Activated T-helper 1 cell treated with anti-CD3 and anti-CD28 coated beads, Interleukin-12 subunit alpha, Interleukin-12 subunit beta, Interleukin-2, Interleukin-4 antibody, amounts not matched to agents 30 ng/mL and 10 ng/mL and 1 ng/mL, durations not matched to agents 14 hours and 24 hours and 36 hours (primary cell): ENCODE measurements at regions of chr3 and their contacts with region 1.

Region 1: DNA sequence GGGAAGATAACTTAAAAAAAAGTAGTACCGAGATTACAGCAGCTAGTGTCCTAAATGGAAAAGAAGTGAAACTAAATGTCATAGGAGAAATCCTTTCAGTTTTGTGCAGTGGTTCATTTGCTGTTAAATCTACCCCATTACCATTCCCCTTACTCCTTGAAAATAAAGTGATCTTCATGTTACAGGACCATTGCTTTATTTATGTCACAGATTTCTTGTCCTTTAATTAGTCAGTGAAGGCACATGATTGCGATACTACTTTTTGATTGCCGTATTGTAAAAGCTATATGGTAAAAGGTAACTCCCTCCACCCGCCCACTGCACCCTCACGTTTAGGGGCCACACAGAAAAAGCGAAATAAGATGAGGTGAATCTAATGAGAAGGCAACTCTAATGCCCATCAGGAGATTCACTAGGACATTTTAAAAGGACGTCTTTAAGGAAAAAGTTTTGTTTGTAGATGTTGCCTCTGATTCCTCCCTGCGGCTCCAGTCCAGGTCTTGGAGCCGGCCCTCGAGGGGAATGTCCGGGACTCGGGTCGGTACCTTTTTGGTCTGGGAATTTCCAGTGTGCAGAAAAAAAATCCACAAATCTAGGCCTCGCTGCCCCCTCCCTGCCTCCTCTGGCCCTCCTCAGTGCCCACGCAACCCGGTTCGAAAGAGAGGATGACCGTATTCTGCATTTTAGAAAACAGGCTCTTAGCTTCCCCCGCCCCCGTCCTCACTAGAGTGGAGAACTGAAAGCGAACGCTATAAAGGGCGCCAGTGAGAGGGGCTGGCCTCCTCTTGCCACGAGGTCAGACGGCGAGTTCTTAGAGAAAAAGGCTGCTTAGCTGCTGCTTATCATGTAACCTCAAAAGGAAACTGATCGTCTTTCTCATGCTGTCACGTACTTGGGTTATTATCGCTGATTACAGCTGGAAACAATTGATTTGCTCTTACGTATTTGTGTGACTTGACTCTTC is 21.8 kb upstream of the NFKBIZ start:
- DNase-seq: peak; percentile 77
- H3K4me3 Mint-ChIP-seq: peak overlapping the region; percentile 93
- H3K27ac Mint-ChIP-seq: peak overlapping the region; percentile 90
- H3K4me1 Mint-ChIP-seq: peaks cover 63% of the 10 kb centered on the region
- H3K27me3 Mint-ChIP-seq: no peaks in the 10 kb centered on the region

Region 2: GRCh38 chr3:101509281-101509680 is 318.2 kb before region 1 on chr3:
- intact Hi-C with region 1: no loop called
- DNase-seq: no peak
- H3K4me3 Mint-ChIP-seq: no peak overlapping the region
- H3K27ac Mint-ChIP-seq: no peak overlapping the region
- H3K4me1 Mint-ChIP-seq: peaks cover 32% of the 10 kb centered on the region
- H3K27me3 Mint-ChIP-seq: no peaks in the 10 kb centered on the region

Region 3: DNA sequence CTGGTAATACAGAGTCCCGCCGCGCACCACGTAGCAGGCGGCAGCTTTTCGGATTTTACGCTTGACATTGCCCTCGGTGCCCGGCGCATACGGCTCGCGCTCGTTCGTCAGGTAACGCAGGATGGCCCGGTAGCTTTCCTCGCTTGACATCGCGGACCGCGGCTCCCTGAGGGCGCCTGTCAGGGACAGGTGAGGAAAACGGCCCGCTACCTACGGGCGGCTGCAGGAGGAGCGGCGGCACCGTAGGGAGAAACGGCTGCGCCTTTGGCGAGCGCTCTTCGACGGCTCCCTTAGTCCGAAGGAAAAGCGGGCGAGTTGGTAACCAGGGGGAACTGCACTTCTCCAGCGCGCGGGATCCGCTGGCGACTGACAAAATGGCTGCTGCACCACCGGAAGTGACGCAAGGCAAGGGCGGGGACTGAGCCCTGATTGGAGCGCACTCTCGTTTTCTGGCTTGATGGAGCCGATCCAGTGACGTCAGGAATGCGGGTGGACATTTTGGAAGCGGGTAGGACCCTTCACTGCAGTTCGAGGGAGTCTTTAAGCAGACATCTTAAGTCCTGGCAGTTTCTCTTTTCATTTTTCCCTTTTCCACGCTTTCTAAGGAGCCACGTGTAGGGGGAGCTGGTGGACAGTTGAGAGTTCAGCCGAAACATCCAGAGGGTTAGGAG is 150.6 kb before region 1 on chr3 and contains the start of gene ZBTB11:
- intact Hi-C with region 1: loop called (anchors 2 kb)
- DNase-seq: peak; percentile 99
- H3K4me3 Mint-ChIP-seq: peak within 1 kb of the TSS; percentile 96
- H3K27ac Mint-ChIP-seq: peak within 1 kb of the TSS; percentile 97
- H3K4me1 Mint-ChIP-seq: peaks cover 56% of the 10 kb centered on the region
- H3K27me3 Mint-ChIP-seq: no peaks in the 10 kb centered on the region
- total RNA-seq, gene ZBTB11: 29.0 and 31.9 TPM in 2 replicates

Region 4: DNA sequence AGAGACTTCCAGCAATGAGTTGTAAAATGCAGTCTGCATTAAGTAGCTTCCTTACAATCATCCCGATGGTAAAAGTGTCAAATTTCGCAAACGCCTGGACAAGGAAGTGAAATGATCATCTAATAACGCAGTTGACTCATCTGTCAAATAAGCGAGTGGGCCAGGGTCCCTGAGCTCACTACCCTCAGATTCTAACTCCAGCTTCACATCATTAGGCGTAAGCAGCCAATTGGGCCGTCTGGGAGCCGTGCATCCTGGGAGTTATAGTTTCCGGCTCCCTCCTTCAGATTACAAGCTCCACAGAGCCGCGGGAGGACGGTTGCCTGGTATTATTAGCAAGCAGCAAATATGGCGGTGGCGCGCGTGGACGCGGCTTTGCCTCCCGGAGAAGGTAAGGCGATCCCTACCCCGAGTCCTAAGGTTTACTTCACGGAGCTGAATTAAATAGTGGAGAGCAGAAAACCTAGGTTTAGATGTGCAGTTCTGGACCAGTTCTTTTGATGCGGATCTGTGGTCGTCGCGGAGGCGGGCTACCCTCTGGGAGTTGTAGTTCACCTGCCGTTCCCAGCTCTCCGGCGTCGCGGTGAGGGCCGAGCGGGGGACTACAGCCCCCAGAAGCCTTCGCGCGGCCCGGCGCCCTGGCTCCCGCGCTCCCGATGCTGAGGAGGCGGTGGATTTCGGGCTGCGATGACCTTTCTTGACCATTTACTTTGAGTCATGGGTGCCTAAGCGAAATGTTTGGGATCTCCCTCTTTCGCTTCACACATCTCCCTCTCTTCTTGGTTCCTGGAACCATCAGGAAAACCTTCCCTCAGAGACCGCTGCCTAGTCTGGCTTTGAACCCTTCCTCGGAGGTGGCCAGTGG is 102.9 kb before region 1 on chr3 and contains the start of gene CEP97:
- intact Hi-C with region 1: loop called (anchors 2 kb)
- DNase-seq: peak; percentile 85
- H3K4me3 Mint-ChIP-seq: peak within 1 kb of the TSS; percentile 94
- H3K27ac Mint-ChIP-seq: peak within 1 kb of the TSS; percentile 96
- H3K4me1 Mint-ChIP-seq: peaks cover 54% of the 10 kb centered on the region
- H3K27me3 Mint-ChIP-seq: no peaks in the 10 kb centered on the region
- total RNA-seq, gene CEP97: 20.2 and 20.6 TPM in 2 replicates

Region 5: DNA sequence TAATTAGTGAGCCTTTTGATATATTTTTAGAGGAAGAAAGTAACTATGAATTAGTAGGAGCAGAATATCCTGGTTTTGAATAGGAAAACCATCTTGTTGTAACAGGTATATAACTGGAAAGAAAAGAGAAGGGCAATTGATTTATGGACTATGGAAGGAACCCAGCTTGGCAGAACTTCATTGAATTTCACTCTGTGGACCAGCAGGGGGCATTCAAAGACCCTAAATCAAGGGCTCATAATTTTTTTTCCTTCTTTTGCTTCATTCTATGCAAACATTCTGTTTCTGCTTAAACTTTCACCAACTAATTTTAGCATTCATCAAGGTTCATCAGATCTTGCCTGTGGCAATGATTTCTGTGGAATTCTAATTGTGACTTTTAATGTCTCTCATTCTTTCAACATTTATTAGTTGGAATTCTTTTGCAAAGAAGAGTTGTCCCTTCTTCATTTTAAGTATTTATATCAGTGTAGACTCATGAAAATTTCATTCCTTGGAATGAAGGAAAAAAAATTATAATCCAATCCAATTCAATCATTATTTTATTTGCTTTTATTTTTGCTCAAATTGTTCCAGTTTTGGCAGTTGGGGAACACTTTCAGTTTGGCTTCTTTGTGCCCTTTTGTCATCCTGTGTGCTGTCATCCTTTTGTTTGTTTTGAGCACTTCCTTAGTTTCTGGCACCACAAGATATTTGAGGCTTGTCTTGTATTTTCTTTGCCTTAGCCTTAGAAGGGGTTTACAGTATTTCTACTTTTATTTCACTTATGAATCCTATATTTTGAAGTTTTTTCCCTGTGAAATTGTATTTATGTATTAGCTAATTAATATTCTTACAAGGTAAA is 18.1 kb before region 1 on chr3:
- intact Hi-C with region 1: loop called (anchors 2 kb)
- DNase-seq: no peak
- H3K4me3 Mint-ChIP-seq: no peak overlapping the region
- H3K27ac Mint-ChIP-seq: peak overlapping the region; percentile 27
- H3K4me1 Mint-ChIP-seq: peaks cover 55% of the 10 kb centered on the region
- H3K27me3 Mint-ChIP-seq: no peaks in the 10 kb centered on the region

Region 6: DNA sequence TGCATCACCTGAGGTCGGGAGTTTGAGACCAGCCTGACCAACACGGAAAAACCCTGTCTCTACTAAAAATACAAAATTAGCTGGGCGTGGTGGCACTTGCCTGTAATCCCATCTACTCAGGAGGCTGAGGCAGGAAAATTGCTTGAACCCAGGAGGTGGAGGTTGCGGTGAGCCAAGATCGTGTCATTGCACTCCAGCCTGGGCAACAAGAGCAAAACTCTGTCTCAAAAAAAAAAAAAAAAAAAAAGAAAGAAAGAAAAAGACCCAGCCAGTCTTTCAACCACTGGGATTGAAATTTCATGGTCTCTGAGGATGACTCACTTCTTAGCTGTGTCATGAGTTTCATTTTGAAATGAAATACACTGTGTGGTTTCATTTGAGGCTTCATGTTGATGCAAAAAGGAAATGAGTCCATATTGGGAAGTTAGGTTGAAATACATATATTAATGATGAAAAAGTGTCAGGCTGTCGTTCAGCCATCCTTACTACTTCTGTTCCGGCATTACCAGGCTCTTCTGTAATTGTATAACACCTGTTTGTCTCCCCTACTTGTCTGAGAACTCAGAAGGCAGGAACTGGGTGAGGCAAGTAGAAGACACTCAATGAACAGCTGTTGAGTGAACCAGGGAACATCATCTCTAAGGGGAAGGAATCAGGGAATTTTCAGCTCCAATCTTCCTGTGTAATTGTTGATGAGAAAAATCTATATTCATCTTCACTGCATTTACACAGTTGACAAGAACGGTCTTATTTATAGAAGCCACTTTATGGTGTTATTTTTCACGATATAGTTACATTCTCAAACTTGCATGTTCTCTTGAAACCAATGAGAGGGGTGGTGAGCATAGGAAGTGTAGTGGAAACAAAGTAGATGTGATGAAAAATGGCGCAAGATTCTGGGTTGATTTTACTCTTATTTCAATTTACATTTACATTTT is 109.2 kb after region 1 on chr3:
- intact Hi-C with region 1: loop called (anchors 1 kb)
- DNase-seq: peak; percentile 33
- H3K4me3 Mint-ChIP-seq: peak overlapping the region; percentile 65
- H3K27ac Mint-ChIP-seq: peak overlapping the region; percentile 77
- H3K4me1 Mint-ChIP-seq: peaks cover 33% of the 10 kb centered on the region
- H3K27me3 Mint-ChIP-seq: peaks cover 12% of the 10 kb centered on the region

Region 7: GRCh38 chr3:102006812-102007485 is 179.5 kb after region 1 on chr3:
- intact Hi-C with region 1: no loop called
- DNase-seq: no peak
- H3K4me3 Mint-ChIP-seq: no peak overlapping the region
- H3K27ac Mint-ChIP-seq: no peak overlapping the region
- H3K4me1 Mint-ChIP-seq: no peaks in the 10 kb centered on the region
- H3K27me3 Mint-ChIP-seq: peaks cover 10% of the 10 kb centered on the region

Region 8: GRCh38 chr3:102163036-102163827 is 335.7 kb after region 1 on chr3:
- intact Hi-C with region 1: loop called (anchors 5 kb)
- DNase-seq: no peak
- H3K4me3 Mint-ChIP-seq: no peak overlapping the region
- H3K27ac Mint-ChIP-seq: no peak overlapping the region
- H3K4me1 Mint-ChIP-seq: peaks cover 17% of the 10 kb centered on the region
- H3K27me3 Mint-ChIP-seq: no peaks in the 10 kb centered on the region